Prostate gland (tissue), 2 donors: ENCODE measurements at regions of chr7 and their contacts with region 1.

Region 1: DNA sequence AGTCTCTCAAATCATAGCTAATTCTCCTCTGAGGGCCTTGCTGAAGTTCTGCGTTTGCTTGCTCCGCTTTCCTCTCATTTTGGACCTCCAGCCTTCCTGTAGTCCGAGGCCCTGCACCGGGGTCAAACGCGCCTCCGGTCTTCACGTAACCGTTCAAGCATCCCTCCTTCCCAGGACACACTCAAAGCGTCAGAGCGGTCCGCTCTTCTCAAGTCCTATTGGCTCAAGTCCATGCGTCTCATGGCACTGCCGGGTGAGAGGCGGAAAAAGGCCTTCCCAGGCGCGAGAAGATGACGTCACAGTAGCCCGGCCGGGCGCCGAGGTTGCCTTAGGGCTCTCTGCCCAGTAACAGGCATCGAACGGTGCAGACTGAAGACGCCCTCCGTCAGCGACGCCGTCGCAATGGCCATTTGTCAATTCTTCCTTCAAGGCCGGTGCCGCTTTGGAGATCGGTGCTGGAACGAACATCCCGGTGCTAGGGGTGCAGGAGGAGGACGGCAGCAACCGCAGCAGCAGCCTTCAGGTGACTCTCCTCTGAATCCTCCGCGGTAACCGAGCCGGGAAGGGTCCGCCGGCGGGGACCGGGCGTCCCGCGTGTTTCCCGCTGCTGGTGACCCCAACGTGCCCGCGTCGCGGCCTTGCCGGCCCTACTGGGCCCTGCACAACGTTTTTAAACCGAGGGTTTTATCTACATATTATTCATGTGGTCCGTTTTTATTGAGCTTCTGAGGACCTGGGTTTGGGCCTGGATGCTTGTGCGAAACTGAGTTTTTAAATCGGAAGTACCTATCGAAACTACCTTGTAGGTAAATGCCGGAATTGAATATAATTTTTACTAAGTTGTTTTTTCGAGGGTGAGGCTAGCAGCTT is at the start of gene NUP42:
- DNase-seq: peak; percentile 91
- H3K4me3 ChIP-seq: peak within 1 kb of the TSS; percentile 68 to 71
- H3K27ac ChIP-seq: peak within 1 kb of the TSS; percentile 82 to 85
- H3K4me1 ChIP-seq: no peaks in the 10 kb centered on the region
- H3K27me3 ChIP-seq: no peaks in the 10 kb centered on the region
- CTCF ChIP-seq: peak in 1 of 4 experiments; percentile 14
- POLR2A ChIP-seq: peak; percentile 66
- total RNA-seq, gene NUP42: 36.6 to 62.9 TPM

Region 2: DNA sequence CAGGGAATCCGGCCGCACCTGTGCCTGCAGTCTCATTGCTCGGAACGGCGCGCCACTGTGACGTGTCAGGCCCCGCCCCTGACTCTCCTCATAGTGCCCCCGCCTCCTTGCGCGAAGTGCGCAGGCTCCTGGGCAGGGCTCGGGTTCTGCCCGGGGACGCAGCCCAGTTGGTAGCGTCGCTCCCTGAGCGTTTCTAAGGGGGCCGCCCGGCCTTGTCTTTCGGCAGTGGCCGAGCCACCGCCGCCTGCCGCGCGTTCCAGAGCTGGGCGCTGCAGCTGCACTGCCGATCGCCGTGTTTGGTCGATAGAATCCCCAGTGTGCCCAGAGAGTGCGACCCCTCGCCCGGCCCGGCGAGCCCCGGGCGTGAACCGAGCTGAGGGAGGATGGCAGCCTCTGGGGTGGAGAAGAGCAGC is 76.3 kb before region 1 on chr7 and contains the start of gene KLHL7:
- intact Hi-C with region 1: loop called (anchors 2 kb)
- DNase-seq: peak; percentile 96
- H3K4me3 ChIP-seq: peak within 1 kb of the TSS; percentile 70 to 99
- H3K27ac ChIP-seq: peak within 1 kb of the TSS; percentile 89 to 97
- H3K4me1 ChIP-seq: no peaks in the 10 kb centered on the region
- H3K27me3 ChIP-seq: no peaks in the 10 kb centered on the region
- CTCF ChIP-seq: peak in 1 of 4 experiments; percentile 3
- POLR2A ChIP-seq: peak; percentile 98
- total RNA-seq, gene KLHL7: 18.1 to 67.7 TPM

Region 3: DNA sequence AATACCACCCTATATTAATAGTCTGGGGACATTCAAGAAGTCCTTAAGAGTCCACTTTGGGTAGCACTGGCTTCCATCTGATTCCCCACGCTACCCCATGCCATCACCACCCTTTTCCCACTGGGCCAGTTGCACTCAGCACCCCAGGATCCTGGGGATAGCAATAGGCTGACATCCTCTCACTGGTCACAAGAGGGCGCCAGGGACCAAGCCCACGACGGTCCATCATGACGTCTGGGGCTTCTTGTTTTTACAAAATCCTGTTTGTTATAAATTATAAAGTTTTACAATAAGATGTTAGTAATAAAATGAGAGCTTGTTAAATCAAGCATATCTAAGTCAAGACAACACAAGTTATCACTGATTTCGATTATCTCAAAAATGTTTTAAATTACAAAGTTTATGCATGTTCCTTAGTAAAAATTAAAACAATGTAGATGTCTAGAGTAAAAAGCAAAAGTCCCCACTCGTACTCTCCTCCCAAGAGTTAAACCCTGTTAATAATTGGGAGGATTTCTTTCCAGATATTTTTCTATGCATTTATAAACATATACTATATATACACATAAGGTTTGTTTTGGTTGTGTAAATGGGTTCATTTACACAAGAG is 80.0 kb after region 1 on chr7:
- intact Hi-C with region 1: no loop called
- DNase-seq: no peak
- H3K4me3 ChIP-seq: no peak overlapping the region
- H3K27ac ChIP-seq: no peak overlapping the region
- H3K4me1 ChIP-seq: no peaks in the 10 kb centered on the region
- H3K27me3 ChIP-seq: no peaks in the 10 kb centered on the region
- CTCF ChIP-seq: peak in 3 of 4 experiments; percentile 30 to 66 (median 37)
- POLR2A ChIP-seq: no peak

Region 4: DNA sequence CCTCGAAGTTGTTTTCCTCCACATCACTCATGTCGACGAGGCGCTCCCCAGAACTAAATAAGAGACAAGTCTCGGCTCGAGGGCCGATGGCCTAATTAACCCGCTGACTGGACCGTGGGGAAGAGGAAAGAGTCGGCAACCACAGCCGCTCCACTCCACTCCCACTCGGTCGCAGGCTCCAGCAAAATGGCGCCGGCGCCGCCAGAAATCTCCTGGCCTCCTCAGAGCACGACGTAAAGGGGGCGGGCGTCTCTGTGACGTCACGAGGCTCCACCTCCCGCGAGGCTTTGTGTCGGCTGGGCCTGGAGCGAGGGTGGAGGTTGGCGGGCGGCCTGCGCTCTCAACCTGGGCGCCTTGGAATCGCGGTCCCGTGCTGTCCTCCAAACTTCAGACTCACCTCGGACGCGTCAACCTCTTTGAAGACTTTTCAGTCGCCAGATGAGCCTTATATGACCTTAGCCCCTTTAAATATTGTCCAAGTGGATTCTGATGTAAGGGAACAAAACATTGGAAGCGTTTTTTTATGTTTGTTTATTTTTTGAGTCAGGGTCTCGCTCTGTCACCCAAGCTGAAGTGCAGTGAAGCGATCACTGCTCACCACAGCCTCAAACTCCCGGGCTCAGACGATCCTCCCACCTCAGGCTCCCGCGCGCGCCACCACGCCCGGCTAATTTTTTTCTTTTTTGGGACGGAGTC is 350.0 kb after region 1 on chr7 and contains the start of gene TRA2A:
- intact Hi-C with region 1: loop called (anchors 5 kb)
- DNase-seq: peak; percentile 98
- H3K4me3 ChIP-seq: peak within 1 kb of the TSS; percentile 74 to 77
- H3K27ac ChIP-seq: peak within 1 kb of the TSS; percentile 96 to 97
- H3K4me1 ChIP-seq: no peaks in the 10 kb centered on the region
- H3K27me3 ChIP-seq: no peaks in the 10 kb centered on the region
- CTCF ChIP-seq: no peak
- POLR2A ChIP-seq: peak; percentile 97
- total RNA-seq, gene TRA2A: 34.3 to 46.0 TPM

Region 5: GRCh38 chr7:23570592-23571200 is 388.8 kb after region 1 on chr7:
- intact Hi-C with region 1: no loop called
- DNase-seq: peak; percentile 59
- H3K4me3 ChIP-seq: no peak overlapping the region
- H3K27ac ChIP-seq: no peak overlapping the region
- H3K4me1 ChIP-seq: no peaks in the 10 kb centered on the region
- H3K27me3 ChIP-seq: no peaks in the 10 kb centered on the region
- CTCF ChIP-seq: peak; percentile 17 to 81 (median 68)
- POLR2A ChIP-seq: no peak